Activated B cell treated with CpG ODN at 0.5 μM for 24 hours (primary cell): ENCODE measurements at regions of chr6 and their contacts with region 1.

Region 1: GRCh38 chr6:159174263-159174969 is 5.2 kb downstream of the FNDC1 start:
- DNase-seq: peak; percentile 52
- ATAC-seq: peak; percentile 81
- H3K4me3 Mint-ChIP-seq: peak overlapping the region; percentile 36
- H3K27ac Mint-ChIP-seq: no peak overlapping the region
- H3K4me1 Mint-ChIP-seq: peaks cover 18% of the 10 kb centered on the region
- H3K27me3 Mint-ChIP-seq: peaks cover 44% of the 10 kb centered on the region
- CTCF ChIP-seq: peak; percentile 70

Region 2: GRCh38 chr6:159184559-159184958 is 10.1 kb after region 1 on chr6:
- CTCF ChIA-PET with region 1: interaction called, 11 read pairs
- POLR2A ChIA-PET with region 1: no interaction called
- intact Hi-C with region 1: no loop called
- DNase-seq: no peak
- ATAC-seq: no peak
- H3K4me3 Mint-ChIP-seq: no peak overlapping the region
- H3K27ac Mint-ChIP-seq: no peak overlapping the region
- H3K4me1 Mint-ChIP-seq: peaks cover 2% of the 10 kb centered on the region
- H3K27me3 Mint-ChIP-seq: peaks cover 17% of the 10 kb centered on the region
- CTCF ChIP-seq: no peak

Region 3: DNA sequence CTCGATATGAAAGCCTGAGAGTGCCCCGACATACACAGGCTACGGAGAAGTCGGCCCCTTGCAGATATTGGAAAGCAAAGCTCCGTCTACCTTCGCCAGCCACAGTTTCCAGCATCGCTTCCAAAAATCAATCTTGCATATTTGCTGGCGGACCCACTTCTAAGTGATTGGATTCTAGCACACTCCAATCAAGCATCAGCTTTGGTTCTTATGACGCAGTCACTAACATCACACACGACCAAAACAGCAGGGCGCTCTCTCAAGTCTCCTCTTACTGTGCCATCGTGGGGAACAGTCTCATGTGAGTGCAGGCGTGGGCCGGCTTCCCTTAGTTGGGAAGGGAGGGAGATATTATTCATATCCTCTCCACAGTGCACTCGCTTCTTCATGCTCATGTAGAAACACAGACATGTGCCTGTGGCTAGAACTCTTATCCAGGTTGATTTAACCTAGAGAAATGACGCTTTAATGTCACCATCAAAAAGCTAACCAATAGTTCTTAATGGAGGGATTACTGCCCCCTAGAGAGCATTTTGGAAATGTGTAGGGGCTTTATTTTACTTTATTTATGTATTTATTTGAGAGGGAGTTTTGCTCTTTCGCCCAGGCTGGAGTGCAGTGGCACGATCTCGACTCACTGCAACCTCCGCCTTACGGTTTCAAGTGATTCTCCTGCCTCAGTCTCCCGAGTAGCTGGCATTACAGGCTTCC is 288.9 kb after region 1 on chr6:
- CTCF ChIA-PET with region 1: no interaction called
- POLR2A ChIA-PET with region 1: no interaction called
- intact Hi-C with region 1: loop called (anchors 5 kb)
- DNase-seq: no peak
- ATAC-seq: no peak
- H3K4me3 Mint-ChIP-seq: no peak overlapping the region
- H3K27ac Mint-ChIP-seq: no peak overlapping the region
- H3K4me1 Mint-ChIP-seq: peaks cover 32% of the 10 kb centered on the region
- H3K27me3 Mint-ChIP-seq: peaks cover 2% of the 10 kb centered on the region
- CTCF ChIP-seq: no peak

Region 4: DNA sequence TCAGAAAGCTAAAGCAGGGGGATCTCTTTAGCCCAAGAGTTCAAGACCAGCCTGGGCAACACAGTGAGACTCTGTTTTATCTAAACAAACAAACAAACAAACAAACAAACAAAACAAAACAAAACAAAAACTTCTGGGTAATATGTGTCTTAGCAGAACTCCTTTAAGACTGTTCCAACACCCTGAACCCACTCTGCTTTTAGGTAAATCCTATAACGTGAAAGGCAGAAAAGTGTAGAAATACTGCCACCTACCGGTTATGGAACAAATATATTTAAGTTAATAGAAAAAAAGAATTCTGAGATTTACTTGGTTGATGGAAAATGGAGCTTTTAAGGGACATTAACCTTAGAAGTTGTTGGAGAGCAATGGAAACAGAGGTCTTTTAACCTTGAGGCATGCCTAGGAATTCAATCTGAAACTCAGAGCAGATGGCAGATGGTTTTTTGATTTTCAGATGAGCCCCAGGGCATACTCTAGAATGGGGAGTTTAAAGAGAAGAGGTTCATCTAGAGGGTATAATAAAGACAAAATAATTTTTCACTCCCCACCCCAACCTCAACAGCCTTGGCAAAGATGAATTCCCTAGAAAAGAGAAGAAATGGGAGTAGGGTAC is 480.2 kb after region 1 on chr6:
- CTCF ChIA-PET with region 1: interaction called, 90 read pairs
- POLR2A ChIA-PET with region 1: no interaction called
- intact Hi-C with region 1: loop called (anchors 1 kb)
- DNase-seq: no peak
- ATAC-seq: no peak
- H3K4me3 Mint-ChIP-seq: no peak overlapping the region
- H3K27ac Mint-ChIP-seq: no peak overlapping the region
- H3K4me1 Mint-ChIP-seq: no peaks in the 10 kb centered on the region
- H3K27me3 Mint-ChIP-seq: no peaks in the 10 kb centered on the region
- CTCF ChIP-seq: peak; percentile 74

Region 5: DNA sequence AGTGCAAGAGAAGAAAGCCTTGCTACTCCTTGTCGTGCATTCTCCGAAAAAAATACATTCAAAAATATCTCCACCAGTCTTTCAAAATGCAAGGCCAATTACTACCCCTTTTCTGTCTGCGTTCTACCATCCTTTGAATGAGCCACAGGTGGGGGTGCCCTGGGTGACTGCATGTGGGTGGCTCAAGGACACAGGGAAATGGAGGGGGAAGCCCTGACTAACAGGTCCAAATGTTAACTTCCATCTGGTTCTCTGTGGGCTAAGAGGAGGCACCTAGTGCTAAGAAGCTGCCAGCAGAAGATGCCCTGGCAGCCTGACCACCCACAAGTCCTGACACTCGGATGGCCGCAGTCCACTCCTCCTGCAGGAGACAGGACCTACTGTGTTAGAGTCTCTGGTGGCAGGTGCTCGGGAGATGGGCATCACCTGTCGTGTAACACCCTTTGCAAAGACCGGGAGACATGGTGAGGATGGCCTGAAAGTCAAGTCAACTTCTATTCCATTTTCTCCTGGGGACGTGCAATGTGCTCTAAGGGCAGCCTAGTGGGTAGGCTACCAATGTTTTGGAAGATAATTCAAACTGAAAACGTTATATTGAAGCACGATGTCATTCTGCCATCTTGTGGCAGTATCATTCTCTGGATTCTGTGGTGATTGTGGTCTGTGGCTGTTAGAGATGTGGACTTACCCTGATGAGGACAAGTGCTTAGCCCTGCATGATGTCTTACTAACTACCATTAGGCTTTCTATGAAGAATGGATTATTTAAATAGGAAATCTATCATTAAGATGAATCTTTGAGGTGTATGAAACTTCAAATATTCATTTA is 767.1 kb after region 1 on chr6:
- CTCF ChIA-PET with region 1: no interaction called
- POLR2A ChIA-PET with region 1: no interaction called
- intact Hi-C with region 1: loop called (anchors 10 kb)
- DNase-seq: no peak
- ATAC-seq: peak; percentile 69
- H3K4me3 Mint-ChIP-seq: no peak overlapping the region
- H3K27ac Mint-ChIP-seq: no peak overlapping the region
- H3K4me1 Mint-ChIP-seq: no peaks in the 10 kb centered on the region
- H3K27me3 Mint-ChIP-seq: peaks cover 10% of the 10 kb centered on the region
- CTCF ChIP-seq: no peak

Region 6: GRCh38 chr6:160455541-160456213 is 1281.3 kb after region 1 on chr6:
- CTCF ChIA-PET with region 1: interaction called, 3 read pairs
- POLR2A ChIA-PET with region 1: no interaction called
- intact Hi-C with region 1: loop called (anchors 2 kb)
- DNase-seq: peak; percentile 52
- ATAC-seq: peak; percentile 88
- H3K4me3 Mint-ChIP-seq: no peak overlapping the region
- H3K27ac Mint-ChIP-seq: no peak overlapping the region
- H3K4me1 Mint-ChIP-seq: peaks cover 18% of the 10 kb centered on the region
- H3K27me3 Mint-ChIP-seq: peaks cover 11% of the 10 kb centered on the region
- CTCF ChIP-seq: peak; percentile 27